GM10248 (cell line): ENCODE measurements at regions of chr2 and their contacts with region 1.

Region 1: GRCh38 chr2:201231781-201232466 is 28.4 kb upstream of the CASP8 start:
- DNase-seq: peak; percentile 83
- CTCF ChIP-seq: peak; percentile 83

Region 2: GRCh38 chr2:200525882-200526651 is 705.9 kb before region 1 on chr2 and contains the start of gene SGO2:
- CTCF ChIA-PET with region 1: no interaction called
- POLR2A ChIA-PET with region 1: no interaction called
- DNase-seq: peak; percentile 97
- CTCF ChIP-seq: no peak

Region 3: GRCh38 chr2:200963124-200963917 is 268.6 kb before region 1 on chr2 and contains the start of gene ORC2:
- CTCF ChIA-PET with region 1: interaction called, 10 read pairs
- POLR2A ChIA-PET with region 1: no interaction called
- DNase-seq: peak; percentile 95
- CTCF ChIP-seq: peak; percentile 83

Region 4: DNA sequence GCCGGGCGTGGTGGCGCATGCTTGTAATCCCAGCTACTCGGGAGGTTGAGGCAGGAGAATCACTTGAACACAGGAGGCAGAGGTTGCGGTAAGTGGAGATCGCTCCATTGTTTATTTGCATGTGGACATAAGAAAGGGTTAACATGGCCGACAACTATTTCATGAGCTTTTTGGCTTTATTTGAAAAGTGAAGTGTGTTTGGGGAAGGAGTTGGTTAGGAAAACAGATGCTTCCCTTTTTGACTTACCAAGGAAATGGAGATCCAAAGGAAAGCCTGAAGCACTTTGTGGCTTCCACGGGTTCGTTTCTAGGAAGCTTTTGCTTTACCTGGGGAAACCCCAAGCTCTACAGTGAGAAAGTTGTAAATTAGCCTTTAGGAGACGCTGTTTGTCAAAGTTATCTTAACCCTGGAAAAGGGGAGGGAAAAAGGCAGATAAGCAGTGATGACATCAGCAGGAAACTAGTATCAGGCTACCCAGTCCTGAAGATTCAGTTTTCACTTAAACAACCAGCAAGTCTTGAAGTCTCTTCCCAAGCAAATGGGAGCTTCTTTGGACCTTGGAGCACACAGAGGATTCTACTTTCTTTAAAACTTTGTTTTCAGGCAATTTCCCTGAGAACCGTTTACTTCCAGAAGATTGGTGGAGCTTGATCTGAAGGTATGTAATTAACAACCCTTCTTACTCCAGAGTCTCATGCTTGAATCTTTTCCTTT is 49.1 kb before region 1 on chr2 and contains the start of gene CASP10:
- CTCF ChIA-PET with region 1: interaction called, 66 read pairs
- POLR2A ChIA-PET with region 1: interaction called, 3 read pairs
- DNase-seq: peak; percentile 67
- CTCF ChIP-seq: peak; percentile 62

Region 5: DNA sequence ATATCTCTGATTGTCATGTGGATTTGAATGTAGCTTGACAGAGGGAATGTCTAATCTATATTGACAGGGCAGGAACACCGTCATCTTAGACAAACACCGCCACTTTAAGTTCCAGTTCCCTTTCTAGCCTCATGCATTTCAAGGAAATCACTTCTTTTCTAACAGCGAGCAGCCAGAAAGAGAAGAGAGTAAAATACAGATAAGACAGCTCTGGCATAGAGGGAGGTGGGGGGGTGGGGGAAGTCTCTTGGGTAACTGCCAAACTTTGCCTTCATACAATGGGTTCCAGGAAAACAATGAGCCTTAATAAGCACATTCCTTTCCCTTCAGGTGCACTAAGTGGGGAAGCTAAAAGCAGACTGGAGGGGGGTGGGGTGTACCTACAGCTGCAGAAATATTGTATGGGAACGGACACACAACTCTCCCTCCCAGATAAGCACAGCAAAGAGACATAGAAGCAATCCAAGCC is 11.8 kb before region 1 on chr2:
- CTCF ChIA-PET with region 1: interaction called, 95 read pairs
- POLR2A ChIA-PET with region 1: no interaction called
- DNase-seq: no peak
- CTCF ChIP-seq: no peak

Region 6: GRCh38 chr2:201257956-201258665 is 26.2 kb after region 1 on chr2:
- CTCF ChIA-PET with region 1: interaction called, 35 read pairs
- POLR2A ChIA-PET with region 1: interaction called, 4 read pairs
- DNase-seq: peak; percentile 71
- CTCF ChIP-seq: no peak

Region 7: DNA sequence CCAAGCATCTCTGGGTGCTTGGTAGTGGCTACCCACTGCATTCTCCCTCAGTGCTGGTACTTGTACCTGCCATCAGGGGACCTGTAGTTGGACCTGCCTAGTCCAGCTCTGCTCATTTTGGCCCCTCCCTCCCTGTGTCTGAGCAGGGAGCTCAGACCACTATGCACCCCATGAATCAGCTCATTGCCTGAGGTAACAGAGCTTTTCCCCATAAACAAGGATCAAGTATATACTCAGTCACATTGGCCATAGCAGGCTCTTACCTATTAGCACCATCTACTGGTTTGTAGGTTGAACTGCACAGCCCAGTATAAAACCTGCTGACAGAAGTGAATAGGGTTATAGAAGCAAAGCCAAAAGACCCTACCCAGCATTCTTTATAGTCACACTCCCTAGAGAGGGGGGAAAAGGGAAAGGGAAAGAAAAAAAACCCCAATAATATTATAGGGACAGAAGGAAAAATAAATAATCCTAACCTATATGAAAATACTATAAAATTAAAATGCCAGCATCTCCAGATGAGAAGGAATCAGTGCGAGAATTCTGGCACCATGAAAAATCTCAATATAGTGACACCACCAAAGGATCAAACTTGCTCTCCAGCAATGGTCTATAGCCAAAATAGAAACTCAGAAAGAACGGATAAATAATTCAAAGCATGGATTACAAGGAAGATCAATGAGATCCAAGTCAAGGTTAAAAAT is 132.1 kb after region 1 on chr2:
- CTCF ChIA-PET with region 1: interaction called, 36 read pairs
- POLR2A ChIA-PET with region 1: no interaction called
- DNase-seq: peak; percentile 32
- CTCF ChIP-seq: peak; percentile 78